ENCODE measurements at regions of chr16 and their contacts with region 1.

Region 1: GRCh38 chr16:11576427-11577289 is 10.1 kb downstream of the LITAF start:
- DNase-seq: peak; percentile 83 to 91 (median 91)
- H3K4me3 ChIP-seq: peak overlapping the region in 1 of 3 experiments; percentile 23
- H3K4me3 Mint-ChIP-seq: peak overlapping the region in 1 of 2 donors; percentile 64
- H3K27ac ChIP-seq: peak overlapping the region; percentile 29 to 62
- H3K27ac Mint-ChIP-seq: peak overlapping the region; percentile 76 to 89 (median 80)
- H3K4me1 ChIP-seq: peaks cover 22 to 23% of the 10 kb centered on the region in 2 donors
- H3K4me1 Mint-ChIP-seq: peaks cover 63% of the 10 kb centered on the region
- H3K27me3 ChIP-seq: no peaks in the 10 kb centered on the region
- H3K27me3 Mint-ChIP-seq: peaks cover 2 to 67% (median 34%) of the 10 kb centered on the region in 3 donors
- CTCF ChIP-seq: no peak

Region 2: DNA sequence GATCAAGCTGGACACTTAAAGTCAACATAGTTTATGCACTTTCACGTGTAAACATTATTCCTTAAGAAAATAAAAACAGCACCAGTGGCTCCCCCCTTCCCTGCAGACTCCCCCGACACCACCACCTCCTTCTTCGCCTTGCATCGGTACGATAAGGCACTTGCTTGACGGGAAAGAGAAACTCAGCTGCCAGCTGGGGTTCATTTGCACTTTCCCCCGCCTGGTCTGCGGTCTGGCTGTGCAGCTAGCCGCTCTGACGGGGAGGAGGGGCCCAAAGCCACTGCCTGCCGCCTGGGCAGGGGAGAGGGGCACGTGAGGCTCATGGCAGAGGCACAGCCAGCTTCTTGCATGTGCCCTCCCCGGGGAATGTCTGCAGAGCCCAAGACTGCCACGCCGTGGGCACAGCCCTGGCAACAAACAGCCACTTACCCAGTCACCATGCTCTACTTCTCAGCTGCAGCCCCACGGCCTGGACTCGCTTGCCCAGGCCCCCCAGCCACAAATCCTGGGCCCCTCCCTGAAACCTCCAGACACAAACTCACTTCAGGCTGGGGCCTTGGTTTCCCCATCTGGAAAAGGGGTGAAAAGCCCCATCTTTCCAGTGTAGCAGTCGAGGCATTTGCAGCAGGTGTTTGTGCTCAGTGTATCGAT is 279.0 kb before region 1 on chr16:
- intact Hi-C with region 1: no loop called
- DNase-seq: peak; percentile 42 to 50 (median 46)
- H3K4me3 ChIP-seq: peak overlapping the region in 1 of 3 experiments; percentile 57
- H3K4me3 Mint-ChIP-seq: peak overlapping the region; percentile 66 to 85
- H3K27ac ChIP-seq: no peak overlapping the region
- H3K27ac Mint-ChIP-seq: peak overlapping the region in 1 of 7 donors; percentile 57
- H3K4me1 ChIP-seq: peaks cover 12 to 15% of the 10 kb centered on the region in 2 donors
- H3K4me1 Mint-ChIP-seq: peaks cover 20% of the 10 kb centered on the region
- H3K27me3 ChIP-seq: peaks cover 0 to 6% of the 10 kb centered on the region in 2 donors
- H3K27me3 Mint-ChIP-seq: peaks cover 22 to 39% (median 38%) of the 10 kb centered on the region in 3 donors
- CTCF ChIP-seq: no peak

Region 3: DNA sequence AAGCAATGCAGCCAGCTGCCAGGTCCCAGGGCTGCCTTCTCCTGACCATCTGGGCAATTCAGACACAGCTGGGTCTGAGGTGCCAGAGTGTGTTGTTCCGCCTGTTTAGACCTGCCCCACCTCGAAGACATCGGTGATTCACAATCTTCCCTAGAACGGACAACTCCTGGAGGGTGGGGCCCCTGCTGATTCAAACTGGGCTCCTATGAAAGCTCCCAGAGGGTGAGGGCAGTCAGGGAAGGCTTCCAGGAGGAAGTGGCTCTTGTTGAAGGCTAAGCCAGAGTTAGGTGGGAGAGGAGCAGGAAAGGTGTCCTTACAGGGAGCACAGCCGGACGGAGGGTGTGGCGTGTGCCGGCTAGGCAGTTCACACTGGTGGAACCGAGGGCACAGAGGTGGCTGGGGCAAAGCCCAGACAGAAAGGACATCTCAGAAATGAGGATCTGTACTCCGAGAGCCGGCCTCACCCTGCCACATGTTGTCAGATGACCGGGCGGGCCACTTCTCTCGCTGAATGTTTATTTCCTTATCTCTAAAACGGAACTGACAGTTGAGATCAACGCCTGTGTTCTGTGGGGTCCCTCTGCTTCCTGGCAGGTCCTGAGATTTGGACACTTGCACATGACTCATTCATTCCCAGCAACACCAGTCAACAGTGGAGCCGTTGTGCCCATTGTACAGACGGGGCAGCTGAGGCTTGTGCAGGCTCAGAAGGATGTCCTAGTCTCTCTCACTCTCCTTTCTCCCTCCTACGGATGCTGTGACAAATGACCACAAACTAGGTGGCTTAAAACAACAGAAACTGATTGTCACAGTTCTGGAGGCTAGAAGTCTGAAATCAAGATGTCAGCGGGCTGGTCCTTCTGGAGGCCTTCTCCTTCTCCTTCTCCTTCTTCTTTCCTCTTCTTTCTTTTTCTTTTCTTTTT is 37.0 kb after region 1 on chr16:
- intact Hi-C with region 1: loop called (anchors 5 kb)
- DNase-seq: peak; percentile 85 to 95 (median 93)
- H3K4me3 ChIP-seq: peak overlapping the region in 1 of 3 experiments; percentile 52
- H3K4me3 Mint-ChIP-seq: peak overlapping the region; percentile 70 to 77
- H3K27ac ChIP-seq: peak overlapping the region; percentile 97 to 98
- H3K27ac Mint-ChIP-seq: peak overlapping the region; percentile 92 to 100 (median 99)
- H3K4me1 ChIP-seq: peaks cover 67 to 68% of the 10 kb centered on the region in 2 donors
- H3K4me1 Mint-ChIP-seq: peaks cover 75% of the 10 kb centered on the region
- H3K27me3 ChIP-seq: no peaks in the 10 kb centered on the region
- H3K27me3 Mint-ChIP-seq: peaks cover 1 to 24% (median 3%) of the 10 kb centered on the region in 3 donors
- CTCF ChIP-seq: no peak

Region 4: DNA sequence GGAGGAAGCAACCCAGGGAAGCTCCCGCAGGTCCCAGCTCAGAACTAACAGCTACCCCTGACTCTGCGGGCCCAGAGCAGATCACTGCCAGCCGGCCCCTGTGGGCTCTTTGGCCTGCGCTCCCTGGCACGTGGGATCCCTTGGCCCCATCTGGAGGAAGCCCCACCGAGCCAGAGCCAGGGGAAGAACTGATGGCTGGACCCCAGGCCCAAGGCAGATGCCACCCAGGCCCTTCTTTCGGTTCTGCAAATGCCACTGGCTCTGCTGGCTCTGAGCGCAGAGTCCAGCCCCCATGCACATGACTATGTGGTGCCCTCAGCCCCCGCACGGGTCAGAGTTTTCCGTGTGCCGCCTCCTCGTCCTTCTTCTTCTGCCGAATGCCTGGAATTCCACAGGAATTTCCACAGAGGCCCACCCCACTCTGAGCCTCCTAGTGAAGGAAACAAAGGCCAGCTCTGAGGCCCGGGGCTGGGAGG is 55.8 kb after region 1 on chr16:
- intact Hi-C with region 1: loop called in 1 of 2 experiments (anchors 5 kb)
- DNase-seq: peak in 2 of 3 donors; percentile 40 to 53
- H3K4me3 ChIP-seq: peak overlapping the region in 1 of 3 experiments; percentile 25
- H3K4me3 Mint-ChIP-seq: no peak overlapping the region
- H3K27ac ChIP-seq: peak overlapping the region; percentile 41 to 60
- H3K27ac Mint-ChIP-seq: peak overlapping the region in 6 of 7 donors; percentile 57 to 87 (median 80)
- H3K4me1 ChIP-seq: peaks cover 51 to 52% of the 10 kb centered on the region in 2 donors
- H3K4me1 Mint-ChIP-seq: peaks cover 56% of the 10 kb centered on the region
- H3K27me3 ChIP-seq: no peaks in the 10 kb centered on the region
- H3K27me3 Mint-ChIP-seq: peaks cover 4 to 40% (median 7%) of the 10 kb centered on the region in 3 donors
- CTCF ChIP-seq: no peak

Measured in CD14-positive monocyte (primary cell).